ENCODE measurements at regions of chr9 and their contacts with region 1.

Region 1: GRCh38 chr9:98890256-98890655 is 53.5 kb upstream of the COL15A1 start:
- DNase-seq: no peak

Region 2: GRCh38 chr9:98287383-98287782 is 602.9 kb before region 1 on chr9:
- intact Hi-C with region 1: no loop called
- DNase-seq: no peak

Region 3: DNA sequence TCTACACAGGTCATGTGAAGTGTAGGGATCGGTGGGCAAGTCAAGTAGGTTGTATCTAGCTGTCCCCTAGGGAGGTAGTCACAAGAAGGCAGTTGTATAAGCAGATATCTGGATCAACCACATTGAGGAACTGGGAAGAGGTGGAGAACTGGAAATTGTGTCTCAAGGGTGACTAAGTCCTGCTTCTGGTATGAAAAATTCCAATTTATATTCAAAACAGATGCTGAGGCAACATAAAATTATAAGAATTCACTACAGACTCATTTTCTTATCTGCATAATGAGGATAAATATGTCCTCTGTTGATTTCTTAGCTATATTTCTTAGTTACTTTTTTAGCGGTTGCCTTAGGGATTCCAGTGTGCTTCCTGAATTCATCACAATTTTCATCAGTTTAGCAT is 36.0 kb before region 1 on chr9:
- intact Hi-C with region 1: loop called in 1 of 2 experiments (anchors 2 kb)
- DNase-seq: no peak